PC-9 (cell line): ENCODE measurements at regions of chr3 and their contacts with region 1.

Region 1: DNA sequence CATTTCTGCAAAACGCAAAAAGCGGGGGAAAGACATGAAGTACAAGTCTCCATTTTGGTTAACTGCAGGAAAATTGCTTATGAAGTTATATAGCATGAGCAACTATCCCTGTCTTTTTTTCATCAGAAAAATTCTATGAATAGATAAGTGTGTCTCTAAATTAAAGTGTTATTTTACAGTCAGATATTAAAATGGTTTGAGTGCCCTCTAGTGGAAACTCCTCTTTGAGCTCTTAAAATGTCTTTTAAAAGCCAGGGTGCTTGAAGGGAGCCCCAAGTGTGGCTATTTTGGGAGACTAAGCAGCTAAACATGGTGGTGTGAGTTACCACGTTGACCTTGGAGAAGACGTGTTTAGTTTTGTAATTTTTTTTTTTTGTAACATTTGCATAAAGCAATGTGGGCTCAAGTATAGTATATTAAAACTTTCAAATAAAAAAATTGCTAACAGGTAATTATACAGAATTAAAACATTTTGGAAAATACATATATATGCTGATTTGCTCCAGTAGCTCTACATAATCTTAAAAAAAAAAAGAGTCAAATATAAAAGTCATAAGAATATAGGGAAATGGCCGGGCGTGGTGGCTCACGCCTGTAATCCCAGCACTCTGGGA is 77.2 kb downstream of the PPP2R3A start:
- DNase-seq: peak in 1 of 2 experiments; percentile 48
- H3K4me3 ChIP-seq: no peak overlapping the region
- H3K27ac ChIP-seq: no peak overlapping the region
- H3K4me1 ChIP-seq: no peaks in the 10 kb centered on the region
- H3K27me3 ChIP-seq: no peaks in the 10 kb centered on the region
- CTCF ChIP-seq: peak; percentile 82

Region 2: DNA sequence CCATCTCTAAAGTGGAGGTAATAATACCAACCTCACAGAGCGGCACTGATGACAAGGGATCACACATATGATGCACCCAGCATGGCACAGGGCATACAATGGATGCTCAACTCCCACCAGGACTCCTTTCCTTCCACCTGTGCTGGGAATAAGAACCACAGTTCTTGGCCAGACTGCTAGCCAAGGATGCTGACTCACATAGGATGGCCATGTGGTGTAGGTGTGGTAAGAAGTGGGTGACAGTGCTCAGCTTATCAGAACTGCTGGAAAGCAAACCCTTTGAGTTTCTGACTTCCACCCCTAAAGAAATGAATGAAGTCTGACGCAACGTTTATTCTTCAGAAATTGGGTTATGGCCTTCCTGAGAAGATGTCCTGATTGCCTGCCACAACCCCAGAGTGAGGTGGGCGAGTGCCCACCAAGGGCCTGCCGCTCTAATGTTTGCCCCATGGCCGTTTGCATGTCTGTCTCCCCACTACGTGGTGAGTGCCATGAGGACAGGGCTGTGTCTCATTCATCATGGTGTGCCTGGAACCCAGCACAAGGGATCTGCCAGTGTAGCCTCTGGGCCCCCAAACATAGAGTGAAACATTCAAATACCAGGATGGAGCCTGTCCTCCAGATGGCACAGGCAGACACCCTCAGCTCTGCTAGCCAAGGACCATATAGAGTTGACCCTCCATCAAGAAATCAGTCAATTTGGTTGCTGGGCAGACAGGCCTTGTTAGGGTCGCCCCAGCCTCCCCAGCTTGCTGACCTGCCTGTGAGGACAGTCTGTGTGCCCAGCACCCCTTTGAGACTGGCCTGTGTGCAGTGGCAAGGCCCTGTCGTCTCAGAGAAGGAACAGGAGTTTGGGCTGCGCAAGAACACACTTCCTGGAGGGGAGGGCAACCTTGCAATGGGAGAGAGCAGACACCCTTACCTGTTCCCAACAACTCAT is 1955.4 kb before region 1 on chr3:
- CTCF ChIA-PET with region 1: no interaction called
- POLR2A ChIA-PET with region 1: no interaction called
- intact Hi-C with region 1: no loop called
- DNase-seq: peak in 1 of 2 experiments; percentile 49
- H3K4me3 ChIP-seq: no peak overlapping the region
- H3K27ac ChIP-seq: no peak overlapping the region
- H3K4me1 ChIP-seq: peaks cover 17% of the 10 kb centered on the region
- H3K27me3 ChIP-seq: no peaks in the 10 kb centered on the region
- CTCF ChIP-seq: no peak

Region 3: GRCh38 chr3:135736740-135737139 is 306.0 kb before region 1 on chr3:
- CTCF ChIA-PET with region 1: interaction called, 3 read pairs
- POLR2A ChIA-PET with region 1: no interaction called
- intact Hi-C with region 1: loop called (anchors 5 kb)
- DNase-seq: no peak
- H3K4me3 ChIP-seq: no peak overlapping the region
- H3K27ac ChIP-seq: no peak overlapping the region
- H3K4me1 ChIP-seq: no peaks in the 10 kb centered on the region
- H3K27me3 ChIP-seq: peaks cover 15% of the 10 kb centered on the region
- CTCF ChIP-seq: peak; percentile 62

Region 4: DNA sequence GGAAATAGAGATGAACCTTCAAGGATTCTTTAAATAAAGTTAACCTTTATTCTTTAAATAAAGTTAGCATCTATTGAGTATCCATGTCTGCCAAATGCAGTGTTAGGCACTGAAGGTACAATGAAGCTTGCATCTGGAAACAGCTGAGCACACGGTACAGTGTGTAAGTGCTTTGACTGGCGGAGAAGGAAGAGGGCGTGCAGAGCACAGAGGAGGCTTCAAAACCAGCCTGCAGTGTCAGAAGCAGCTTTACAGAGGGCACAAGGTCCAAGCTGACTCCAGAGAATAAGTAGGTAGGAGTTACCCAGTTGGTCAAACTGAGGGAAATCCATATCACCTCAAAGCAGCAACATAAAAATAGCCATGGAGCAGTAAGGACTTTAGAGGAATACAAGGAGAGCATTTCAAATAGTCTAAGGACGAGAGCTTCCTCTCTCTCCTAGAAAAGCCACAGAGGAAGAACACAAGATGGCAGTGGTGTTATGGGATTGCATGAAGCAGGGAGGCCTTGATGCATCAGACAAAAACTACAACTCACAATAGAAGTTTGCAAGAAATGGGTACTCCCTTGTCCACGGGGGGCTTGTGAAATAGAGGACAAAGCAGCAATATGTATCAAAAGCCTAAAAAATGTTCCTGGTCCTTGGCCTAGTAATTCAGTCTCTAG is 137.5 kb before region 1 on chr3:
- CTCF ChIA-PET with region 1: interaction called, 19 read pairs
- POLR2A ChIA-PET with region 1: no interaction called
- intact Hi-C with region 1: loop called (anchors 1 kb)
- DNase-seq: no peak
- H3K4me3 ChIP-seq: no peak overlapping the region
- H3K27ac ChIP-seq: no peak overlapping the region
- H3K4me1 ChIP-seq: peaks cover 26% of the 10 kb centered on the region
- H3K27me3 ChIP-seq: no peaks in the 10 kb centered on the region
- CTCF ChIP-seq: no peak

Region 5: GRCh38 chr3:135918580-135918962 is 124.1 kb before region 1 on chr3:
- CTCF ChIA-PET with region 1: interaction called, 3 read pairs
- POLR2A ChIA-PET with region 1: no interaction called
- intact Hi-C with region 1: loop called (anchors 1 kb)
- DNase-seq: no peak
- H3K4me3 ChIP-seq: no peak overlapping the region
- H3K27ac ChIP-seq: no peak overlapping the region
- H3K4me1 ChIP-seq: 0 out of 2 replicates have a peak, but pooled peaks cover 3% of the 10 kb centered on the region
- H3K27me3 ChIP-seq: no peaks in the 10 kb centered on the region
- CTCF ChIP-seq: peak; percentile 69